ENCODE measurements at regions of chr2 and their contacts with region 1.

Region 1: DNA sequence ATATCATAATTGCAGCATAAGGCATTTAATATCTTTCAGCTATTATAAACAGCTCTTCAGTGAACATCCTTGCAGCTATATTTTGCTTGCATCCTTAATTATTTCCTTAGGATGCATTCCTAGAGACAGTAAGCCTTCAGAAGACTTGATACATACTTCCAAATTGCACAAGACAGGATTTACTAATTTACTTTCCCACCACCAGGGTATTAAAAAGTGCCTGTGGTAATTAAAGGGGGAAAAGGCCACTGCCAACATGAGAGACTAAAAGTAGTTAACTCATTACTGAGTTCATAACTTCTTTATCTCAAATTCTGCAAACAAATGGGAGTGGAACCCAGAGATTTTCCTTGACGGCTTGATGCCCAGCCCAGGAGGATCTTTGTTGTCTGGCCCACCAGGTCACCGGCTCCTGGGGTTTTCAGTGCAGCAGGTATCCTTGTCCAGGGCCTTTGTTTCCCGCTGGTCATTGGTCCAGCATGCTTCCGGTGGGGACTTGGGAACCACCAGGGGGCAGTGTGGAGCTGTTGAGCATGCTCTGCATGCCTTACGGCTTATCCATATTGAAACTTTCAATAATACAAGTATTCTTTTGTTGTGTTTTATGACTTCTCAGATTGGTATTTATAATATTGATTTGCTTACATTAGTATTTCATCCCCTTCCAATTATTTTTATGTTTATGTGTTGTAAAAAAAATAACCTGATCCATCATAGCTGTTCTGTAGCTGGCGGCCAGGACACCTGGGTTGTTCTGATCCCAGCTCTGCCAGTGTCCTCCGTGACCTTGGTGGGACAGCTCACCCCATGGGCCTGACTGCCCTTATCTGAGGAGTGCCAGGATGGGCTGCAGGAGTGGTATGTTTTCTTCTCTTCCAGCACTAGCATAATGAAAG is 61.4 kb downstream of the TGOLN2 start:
- DNase-seq: peak; percentile 72
- H3K4me3 ChIP-seq: peak overlapping the region in 1 of 2 experiments; percentile 39; a peak in 1 of 4 replicates
- H3K27ac ChIP-seq: no peak overlapping the region
- H3K4me1 ChIP-seq: peaks cover 9 to 22% of the 10 kb centered on the region in 2 experiments; a peak in 2 of 4 replicates
- H3K27me3 ChIP-seq: no peaks in the 10 kb centered on the region
- CTCF ChIP-seq: peak; percentile 95
- EP300 ChIP-seq: no peak
- RAD21 ChIP-seq: peak; percentile 70

Region 2: GRCh38 chr2:85162746-85163301 is 103.6 kb before region 1 on chr2:
- CTCF ChIA-PET with region 1: interaction called, 12 read pairs
- POLR2A ChIA-PET with region 1: no interaction called
- DNase-seq: no peak
- H3K4me3 ChIP-seq: no peak overlapping the region
- H3K27ac ChIP-seq: no peak overlapping the region
- H3K4me1 ChIP-seq: peaks cover 0 to 48% of the 10 kb centered on the region in 2 experiments; a peak in 3 of 4 replicates
- H3K27me3 ChIP-seq: no peaks in the 10 kb centered on the region
- CTCF ChIP-seq: no peak
- EP300 ChIP-seq: no peak
- RAD21 ChIP-seq: no peak

Region 3: DNA sequence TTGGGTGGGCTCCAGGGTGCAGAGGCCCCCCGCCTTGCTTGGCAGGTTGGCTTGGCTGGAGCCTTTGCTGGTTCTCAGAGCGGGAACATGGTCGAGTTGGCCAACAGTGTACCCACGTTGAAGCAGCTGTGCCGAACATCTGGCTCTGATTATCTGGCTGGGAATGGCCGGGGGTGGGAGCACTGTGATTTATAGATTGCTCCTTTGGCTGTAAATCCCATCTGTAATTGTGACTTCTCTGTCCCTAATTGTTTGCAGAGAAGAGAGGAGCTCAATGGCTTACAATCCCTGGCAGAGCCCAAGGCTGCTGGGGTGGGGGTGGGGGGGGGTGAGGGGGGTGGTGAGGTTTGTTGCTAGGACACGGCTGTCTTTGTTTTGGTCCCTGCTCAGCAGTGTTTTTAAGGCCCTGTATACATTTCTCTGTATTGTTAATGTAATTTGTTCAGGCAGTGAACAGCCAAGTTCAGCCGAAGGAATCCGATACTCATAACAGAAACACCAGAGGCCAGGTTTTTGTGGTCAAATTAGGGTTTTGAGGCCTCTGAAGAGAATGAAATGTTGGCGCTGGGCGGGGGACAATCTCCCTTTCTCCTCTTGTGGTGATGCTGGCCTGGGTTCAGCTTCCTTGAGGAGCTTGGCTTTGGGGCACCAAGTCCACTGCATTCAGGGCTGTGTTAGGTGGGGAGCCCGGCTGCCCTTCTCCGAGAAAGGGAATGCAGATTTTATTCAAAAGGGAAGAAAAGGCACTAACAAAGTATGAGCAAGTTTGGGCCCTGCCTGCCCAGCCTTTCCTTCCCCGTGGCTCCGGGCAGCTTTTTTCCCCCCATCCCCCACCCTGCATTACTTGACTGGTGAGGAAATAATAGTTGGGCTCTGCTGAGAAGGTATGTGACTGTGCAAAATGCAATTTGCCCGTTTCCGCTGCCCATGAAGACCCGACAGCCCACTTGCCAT is 50.7 kb before region 1 on chr2:
- CTCF ChIA-PET with region 1: interaction called, 10 read pairs
- POLR2A ChIA-PET with region 1: no interaction called
- DNase-seq: peak; percentile 87
- H3K4me3 ChIP-seq: peak overlapping the region in 1 of 2 experiments; percentile 7; a peak in 1 of 4 replicates
- H3K27ac ChIP-seq: peak overlapping the region; percentile 80 to 90
- H3K4me1 ChIP-seq: peaks cover 36 to 39% of the 10 kb centered on the region in 2 experiments
- H3K27me3 ChIP-seq: no peaks in the 10 kb centered on the region
- CTCF ChIP-seq: no peak
- EP300 ChIP-seq: peak in 1 of 2 experiments; percentile 92; a peak in 2 of 4 replicates
- RAD21 ChIP-seq: peak; percentile 3; the same call in 1 of the 2 replicates

Region 4: DNA sequence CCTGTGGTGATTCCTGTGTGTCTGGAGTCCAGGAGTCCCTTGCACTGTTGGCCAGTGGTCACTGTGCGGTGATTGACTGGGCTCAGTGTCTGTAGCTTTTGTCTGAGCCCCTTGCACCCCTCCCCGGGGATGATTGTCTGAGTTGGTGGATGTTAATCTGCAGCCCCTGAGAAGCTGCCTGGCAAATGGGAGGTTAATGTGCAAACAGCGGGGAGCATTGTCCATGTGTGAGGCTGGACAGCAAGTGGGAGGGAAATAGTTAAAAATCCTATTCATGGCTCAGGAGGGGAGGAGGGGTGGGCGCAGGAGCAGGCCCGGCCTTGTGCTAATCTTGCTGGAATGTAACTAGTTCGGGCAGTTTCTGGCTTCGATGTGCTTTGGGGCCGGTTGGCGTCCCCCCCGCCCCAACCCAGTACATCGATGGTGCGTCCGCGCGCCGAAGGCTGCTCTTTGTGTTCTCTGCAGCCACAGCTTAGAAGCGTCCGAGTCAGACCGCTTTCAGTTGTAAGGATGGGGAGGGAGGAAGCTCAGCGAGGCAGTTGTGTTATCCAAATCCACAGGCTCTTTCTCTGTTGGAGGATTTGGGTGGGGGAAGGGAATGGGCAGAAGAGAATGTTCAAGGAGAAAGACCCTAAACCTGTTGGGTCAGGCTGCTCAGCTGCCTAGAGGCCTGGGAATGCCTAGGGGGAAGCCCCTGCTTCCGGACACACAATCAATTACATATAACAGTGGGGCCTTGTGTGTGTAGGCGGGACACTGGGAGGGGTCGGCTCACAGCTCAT is 10.4 kb before region 1 on chr2:
- CTCF ChIA-PET with region 1: interaction called, 16 read pairs
- POLR2A ChIA-PET with region 1: no interaction called
- DNase-seq: peak; percentile 50
- H3K4me3 ChIP-seq: no peak overlapping the region
- H3K27ac ChIP-seq: peak overlapping the region; percentile 29 to 95; a peak in 3 of 4 replicates
- H3K4me1 ChIP-seq: peaks cover 33 to 62% of the 10 kb centered on the region in 2 experiments
- H3K27me3 ChIP-seq: no peaks in the 10 kb centered on the region
- CTCF ChIP-seq: no peak
- EP300 ChIP-seq: no peak
- RAD21 ChIP-seq: no peak

Region 5: DNA sequence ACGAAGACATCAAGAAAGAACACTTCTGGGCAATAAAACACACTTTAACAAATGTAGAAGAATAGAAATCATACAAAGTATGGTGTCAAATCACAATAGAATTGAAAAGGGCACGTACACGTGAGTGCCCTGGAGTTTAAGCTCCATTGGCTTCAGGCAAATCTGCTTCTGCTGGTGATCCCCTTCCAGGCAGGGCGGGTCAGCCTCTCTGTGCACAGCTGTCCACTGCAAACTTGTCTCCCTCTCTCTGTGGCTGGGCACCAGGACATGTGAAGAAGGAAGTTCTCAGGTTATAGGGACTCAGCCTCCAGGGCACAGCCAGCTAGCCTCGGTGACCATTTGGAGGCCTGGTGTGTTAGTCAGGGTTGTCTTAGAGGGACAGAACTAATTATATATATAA is 556.4 kb after region 1 on chr2:
- CTCF ChIA-PET with region 1: no interaction called
- POLR2A ChIA-PET with region 1: no interaction called
- DNase-seq: no peak
- H3K4me3 ChIP-seq: no peak overlapping the region
- H3K27ac ChIP-seq: no peak overlapping the region
- H3K4me1 ChIP-seq: peaks cover 0 to 7% of the 10 kb centered on the region in 2 experiments; a peak in 2 of 4 replicates
- H3K27me3 ChIP-seq: no peaks in the 10 kb centered on the region
- CTCF ChIP-seq: no peak
- EP300 ChIP-seq: no peak
- RAD21 ChIP-seq: no peak